Naive thymus-derived CD4-positive, alpha-beta T cell (primary cell): ENCODE measurements at regions of chr1 and their contacts with region 1.

Region 1: GRCh38 chr1:168603501-168604110 is 27.2 kb downstream of the XCL1 start:
- DNase-seq: peak; percentile 42 to 72 (median 58)
- ATAC-seq: peak; percentile 89
- H3K4me3 ChIP-seq: no peak overlapping the region
- H3K4me3 Mint-ChIP-seq: no peak overlapping the region
- H3K27ac ChIP-seq: no peak overlapping the region
- H3K27ac Mint-ChIP-seq: no peak overlapping the region
- H3K4me1 ChIP-seq: no peaks in the 10 kb centered on the region
- H3K4me1 Mint-ChIP-seq: peaks cover 0 to 7% (median 0%) of the 10 kb centered on the region in 7 donors
- H3K27me3 ChIP-seq: peaks cover 0 to 4% of the 10 kb centered on the region in 2 donors
- H3K27me3 Mint-ChIP-seq: peaks cover 0 to 30% (median 1%) of the 10 kb centered on the region in 5 donors

Region 2: DNA sequence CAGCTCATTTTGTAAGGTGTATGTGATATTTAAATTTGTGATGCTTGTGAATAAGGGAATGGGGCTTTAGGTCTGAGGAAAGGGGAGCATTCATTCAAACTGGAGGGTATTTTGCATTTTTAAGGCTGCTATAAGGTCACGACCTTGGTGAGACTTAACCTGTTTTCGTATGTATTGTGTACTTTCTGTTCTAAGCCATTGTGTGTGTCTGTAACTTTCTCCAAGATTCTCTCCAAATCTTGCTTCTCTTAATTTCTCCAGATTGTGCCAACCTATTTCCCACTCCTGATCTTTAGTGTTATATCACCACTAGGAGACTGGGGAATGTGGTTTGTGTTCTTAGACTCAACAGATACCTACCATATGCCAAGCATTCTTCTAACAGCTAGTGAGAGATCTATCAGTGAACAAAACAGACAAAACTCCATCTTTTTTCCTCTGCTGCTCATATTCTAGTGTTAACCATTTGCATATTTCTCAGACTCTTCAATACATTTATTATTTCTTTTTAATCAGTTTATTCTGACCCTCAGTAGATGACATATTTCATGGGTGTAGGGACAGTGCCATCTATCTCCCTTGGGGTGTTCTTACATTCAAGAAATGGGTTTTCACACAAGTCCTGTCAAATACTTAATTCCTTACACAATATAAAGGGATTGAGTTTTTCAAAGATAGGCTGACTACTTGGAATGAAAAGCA is 530.3 kb after region 1 on chr1:
- CTCF ChIA-PET with region 1: no interaction called
- POLR2A ChIA-PET with region 1: no interaction called
- intact Hi-C with region 1: loop called (anchors 1 to 10 kb)
- DNase-seq: no peak
- ATAC-seq: no peak
- H3K4me3 ChIP-seq: no peak overlapping the region
- H3K4me3 Mint-ChIP-seq: no peak overlapping the region
- H3K27ac ChIP-seq: no peak overlapping the region
- H3K27ac Mint-ChIP-seq: no peak overlapping the region
- H3K4me1 ChIP-seq: no peaks in the 10 kb centered on the region
- H3K4me1 Mint-ChIP-seq: peaks cover 0 to 8% (median 0%) of the 10 kb centered on the region in 7 donors
- H3K27me3 ChIP-seq: no peaks in the 10 kb centered on the region
- H3K27me3 Mint-ChIP-seq: no peaks in the 10 kb centered on the region

Region 3: GRCh38 chr1:169348383-169349036 is 744.9 kb after region 1 on chr1:
- CTCF ChIA-PET with region 1: interaction called, 23 read pairs
- POLR2A ChIA-PET with region 1: no interaction called
- intact Hi-C with region 1: loop called in 1 of 2 experiments (anchors 1 kb)
- DNase-seq: peak in 7 of 9 donors; percentile 12 to 56 (median 39)
- ATAC-seq: peak; percentile 60
- H3K4me3 ChIP-seq: no peak overlapping the region
- H3K4me3 Mint-ChIP-seq: no peak overlapping the region
- H3K27ac ChIP-seq: no peak overlapping the region
- H3K27ac Mint-ChIP-seq: no peak overlapping the region
- H3K4me1 ChIP-seq: no peaks in the 10 kb centered on the region
- H3K4me1 Mint-ChIP-seq: peaks cover 0 to 18% (median 8%) of the 10 kb centered on the region in 7 donors
- H3K27me3 ChIP-seq: no peaks in the 10 kb centered on the region
- H3K27me3 Mint-ChIP-seq: peaks cover 0 to 3% (median 0%) of the 10 kb centered on the region in 5 donors

Region 4: DNA sequence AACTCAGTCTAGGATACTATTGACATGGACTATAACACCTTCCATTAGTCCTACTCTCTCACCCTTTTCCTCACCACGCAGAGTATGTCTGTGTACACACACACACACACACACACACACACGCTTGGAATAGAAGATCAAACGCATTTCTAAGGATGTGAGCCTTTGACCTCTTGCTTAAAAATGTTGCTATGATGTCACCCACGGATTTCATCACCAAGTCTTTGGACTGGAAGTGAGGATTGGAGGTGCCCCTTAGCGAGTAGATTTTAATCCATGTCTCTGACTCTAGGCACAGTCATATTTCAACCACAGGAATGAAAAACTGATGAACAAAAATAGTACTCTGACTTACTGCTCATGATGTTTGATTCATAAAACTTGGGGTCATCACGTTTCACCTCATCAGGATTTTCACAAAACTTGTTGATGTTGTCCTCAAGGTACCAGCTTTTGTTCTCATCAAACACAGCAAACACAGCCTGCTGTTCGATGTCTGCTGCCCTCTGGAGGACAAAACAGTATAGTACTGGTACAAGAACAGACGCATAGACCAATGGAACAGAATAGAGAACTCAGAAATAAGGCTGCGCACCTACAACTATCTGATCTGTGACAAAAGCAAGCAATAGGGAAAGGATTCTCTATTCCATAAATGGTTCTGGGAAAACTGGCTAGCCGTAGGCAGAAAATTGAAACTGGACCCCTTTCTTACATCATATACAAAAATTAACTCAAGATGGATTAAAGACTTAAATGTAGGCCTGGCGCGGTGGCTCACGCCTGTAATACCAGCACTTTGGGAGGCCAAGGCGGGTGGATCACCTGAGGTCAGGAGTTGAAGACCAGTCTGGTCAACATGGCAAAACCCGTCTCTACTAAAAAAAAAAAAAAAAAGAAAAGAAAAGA is 942.7 kb after region 1 on chr1:
- CTCF ChIA-PET with region 1: no interaction called
- POLR2A ChIA-PET with region 1: no interaction called
- intact Hi-C with region 1: loop called in 1 of 2 experiments (anchors 1 kb)
- DNase-seq: peak in 7 of 9 donors; percentile 40 to 73 (median 68)
- ATAC-seq: peak; percentile 92
- H3K4me3 ChIP-seq: no peak overlapping the region
- H3K4me3 Mint-ChIP-seq: no peak overlapping the region
- H3K27ac ChIP-seq: no peak overlapping the region
- H3K27ac Mint-ChIP-seq: peak overlapping the region in 1 of 9 donors; percentile 7
- H3K4me1 ChIP-seq: no peaks in the 10 kb centered on the region
- H3K4me1 Mint-ChIP-seq: peaks cover 0 to 14% (median 0%) of the 10 kb centered on the region in 7 donors
- H3K27me3 ChIP-seq: no peaks in the 10 kb centered on the region
- H3K27me3 Mint-ChIP-seq: no peaks in the 10 kb centered on the region